Heart left ventricle (tissue), 16 donors: ENCODE measurements at regions of chr20 and their contacts with region 1.

Region 1: GRCh38 chr20:50395258-50395729 is 114.9 kb upstream of the PTPN1 start:
- DNase-seq: peak; percentile 60 to 96 (median 86)
- ATAC-seq: peak; percentile 70 to 87 (median 85)
- H3K4me3 ChIP-seq: no peak overlapping the region
- H3K27ac ChIP-seq: peak overlapping the region; percentile 62 to 95 (median 81)
- H3K4me1 ChIP-seq: peaks cover 0 to 61% (median 32%) of the 10 kb centered on the region in 12 donors
- H3K27me3 ChIP-seq: no peaks in the 10 kb centered on the region
- CTCF ChIP-seq: no peak
- POLR2A ChIP-seq: no peak

Region 2: GRCh38 chr20:50278674-50279531 is 116.4 kb before region 1 on chr20:
- intact Hi-C with region 1: loop called in 1 of 10 experiments (anchors 2 kb)
- DNase-seq: peak; percentile 73 to 93 (median 88)
- ATAC-seq: peak; percentile 83 to 91 (median 87)
- H3K4me3 ChIP-seq: peak overlapping the region in 1 of 12 donors; percentile 23
- H3K27ac ChIP-seq: peak overlapping the region; percentile 38 to 94 (median 76)
- H3K4me1 ChIP-seq: peaks cover 0 to 89% (median 17%) of the 10 kb centered on the region in 12 donors
- H3K27me3 ChIP-seq: no peaks in the 10 kb centered on the region
- CTCF ChIP-seq: peak in 11 of 12 donors; percentile 12 to 57 (median 39)
- POLR2A ChIP-seq: no peak

Region 3: DNA sequence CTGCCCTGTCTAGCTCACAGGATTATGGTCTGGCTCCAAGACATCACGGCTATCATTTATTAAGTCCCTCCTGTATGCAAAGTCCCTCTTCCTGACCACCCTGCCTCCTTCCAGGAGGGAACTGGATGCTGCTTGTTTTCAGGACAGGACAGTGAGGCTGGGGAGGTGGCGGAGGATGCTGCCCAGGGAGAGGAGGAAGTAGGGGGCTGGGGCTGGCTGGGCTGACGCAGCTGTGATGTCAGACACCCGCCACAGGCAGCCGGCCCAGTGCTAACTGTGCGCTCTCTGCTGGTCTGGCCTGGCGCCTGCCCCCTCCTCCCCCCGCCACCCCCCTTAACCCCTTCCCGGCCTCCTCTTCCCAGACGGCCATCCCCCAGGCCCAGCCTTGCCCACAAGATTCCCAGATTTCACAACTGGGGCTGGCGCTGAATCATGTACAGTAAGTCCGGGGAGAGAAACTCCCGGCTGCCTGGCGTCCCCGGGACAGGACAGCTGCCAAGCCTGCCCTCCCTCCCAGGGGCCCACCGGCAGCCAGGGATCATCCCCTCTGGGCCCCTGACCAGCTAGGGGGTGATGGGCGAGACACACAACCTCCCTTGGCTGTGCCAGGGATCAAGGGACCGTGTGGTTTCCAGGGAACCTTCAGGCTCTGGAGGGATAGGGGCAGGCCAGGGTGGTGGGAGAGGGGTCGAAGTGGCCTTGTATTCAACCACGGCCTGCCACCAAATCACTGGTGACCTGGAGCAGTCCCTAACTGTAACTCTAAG is 86.6 kb before region 1 on chr20:
- intact Hi-C with region 1: loop called in 2 of 10 experiments (anchors 1 to 2 kb)
- DNase-seq: peak; percentile 91 to 97 (median 93)
- ATAC-seq: peak; percentile 61 to 92 (median 82)
- H3K4me3 ChIP-seq: peak overlapping the region in 9 of 12 donors; percentile 16 to 50 (median 35)
- H3K27ac ChIP-seq: peak overlapping the region; percentile 62 to 96 (median 91)
- H3K4me1 ChIP-seq: peaks cover 4 to 79% (median 50%) of the 10 kb centered on the region in 12 donors
- H3K27me3 ChIP-seq: no peaks in the 10 kb centered on the region
- CTCF ChIP-seq: peak in 7 of 12 donors; percentile 13 to 45 (median 32)
- POLR2A ChIP-seq: peak in 1 of 2 donors; percentile 40

Region 4: GRCh38 chr20:50346372-50347283 is 48.7 kb before region 1 on chr20:
- intact Hi-C with region 1: loop called in 1 of 10 experiments (anchors 5 kb)
- DNase-seq: peak; percentile 88 to 94 (median 89)
- ATAC-seq: peak; percentile 63 to 85 (median 78)
- H3K4me3 ChIP-seq: peak overlapping the region in 4 of 12 donors; percentile 5 to 44 (median 16)
- H3K27ac ChIP-seq: peak overlapping the region in 11 of 12 donors; percentile 62 to 96 (median 75)
- H3K4me1 ChIP-seq: peaks cover 4 to 72% (median 24%) of the 10 kb centered on the region in 12 donors
- H3K27me3 ChIP-seq: no peaks in the 10 kb centered on the region
- CTCF ChIP-seq: no peak
- POLR2A ChIP-seq: no peak

Region 5: GRCh38 chr20:50415516-50416113 is 20.3 kb after region 1 on chr20:
- intact Hi-C with region 1: loop called in 2 of 10 experiments (anchors 1 to 2 kb)
- DNase-seq: peak; percentile 98 to 100 (median 99)
- ATAC-seq: peak; percentile 97 to 99 (median 98)
- H3K4me3 ChIP-seq: peak overlapping the region in 3 of 12 donors; percentile 18 to 28 (median 27)
- H3K27ac ChIP-seq: peak overlapping the region; percentile 88 to 99 (median 96)
- H3K4me1 ChIP-seq: peaks cover 15 to 43% (median 26%) of the 10 kb centered on the region in 12 donors
- H3K27me3 ChIP-seq: no peaks in the 10 kb centered on the region
- CTCF ChIP-seq: no peak
- POLR2A ChIP-seq: peak in 1 of 2 donors; percentile 81

Region 6: GRCh38 chr20:50450881-50451752 is 55.8 kb after region 1 on chr20:
- intact Hi-C with region 1: loop called in 3 of 10 experiments (anchors 5 to 10 kb)
- DNase-seq: peak in 2 of 5 donors; percentile 50 to 61
- ATAC-seq: peak; percentile 62 to 80 (median 66)
- H3K4me3 ChIP-seq: peak overlapping the region in 11 of 12 donors; percentile 1 to 44 (median 33)
- H3K27ac ChIP-seq: peak overlapping the region in 11 of 12 donors; percentile 9 to 75 (median 66)
- H3K4me1 ChIP-seq: peaks cover 0 to 46% (median 11%) of the 10 kb centered on the region in 12 donors
- H3K27me3 ChIP-seq: no peaks in the 10 kb centered on the region
- CTCF ChIP-seq: no peak
- POLR2A ChIP-seq: peak in 1 of 2 donors; percentile 29

Region 7: DNA sequence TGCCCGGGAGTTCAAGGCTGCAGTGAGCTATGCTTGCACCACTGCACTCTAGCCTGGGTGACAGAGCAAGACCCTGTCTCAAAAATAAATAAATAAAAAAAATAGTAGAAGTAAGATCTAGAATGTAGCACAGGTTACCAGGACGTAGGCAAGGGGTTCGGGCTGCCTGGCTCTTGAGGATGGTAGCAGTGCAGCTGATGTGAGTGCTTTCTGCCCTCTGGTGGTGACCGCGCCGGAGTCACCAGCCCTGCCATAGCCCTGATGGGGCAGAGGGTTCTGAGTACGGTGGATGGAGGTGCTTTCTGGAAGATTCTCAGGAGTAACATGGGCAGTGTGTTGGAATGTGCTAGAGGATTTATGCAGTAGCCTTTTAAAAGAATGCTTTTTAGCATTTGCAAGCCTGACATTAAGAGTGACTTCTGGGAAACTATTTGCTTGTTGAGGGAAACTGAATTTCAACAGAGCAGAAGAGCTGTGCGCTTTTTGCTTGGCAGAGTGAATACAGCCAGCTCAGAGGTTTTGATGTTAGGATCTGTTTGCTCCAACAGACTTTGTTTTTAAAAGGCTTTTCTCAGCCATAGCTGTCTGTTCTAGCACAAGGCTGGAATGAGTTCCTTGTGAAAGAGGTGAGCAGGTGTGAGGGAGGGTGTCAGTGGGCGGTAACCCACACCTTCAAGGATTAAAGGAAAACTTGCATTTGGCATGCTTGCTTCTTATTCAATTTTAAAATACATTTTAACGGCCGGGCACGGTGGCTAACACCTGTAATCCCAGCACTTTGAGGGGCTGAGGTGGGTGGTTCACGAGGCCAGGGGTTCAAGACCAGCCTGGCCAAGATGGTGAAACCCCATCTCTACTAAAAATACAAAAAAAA is 180.8 kb after region 1 on chr20:
- intact Hi-C with region 1: loop called in 2 of 10 experiments (anchors 10 kb)
- DNase-seq: peak; percentile 62 to 83 (median 72)
- ATAC-seq: peak; percentile 64 to 72 (median 66)
- H3K4me3 ChIP-seq: no peak overlapping the region
- H3K27ac ChIP-seq: peak overlapping the region in 9 of 12 donors; percentile 13 to 84 (median 56)
- H3K4me1 ChIP-seq: peaks cover 0 to 71% (median 36%) of the 10 kb centered on the region in 12 donors
- H3K27me3 ChIP-seq: no peaks in the 10 kb centered on the region
- CTCF ChIP-seq: peak; percentile 53 to 79 (median 70)
- POLR2A ChIP-seq: no peak